PC-3 (cell line): ENCODE measurements at regions of chr1 and their contacts with region 1.

Region 1: GRCh38 chr1:181077576-181078242 is 10.8 kb upstream of the IER5 start:
- DNase-seq: peak; percentile 77
- ATAC-seq: peak; percentile 49
- H3K4me3 ChIP-seq: peak overlapping the region; percentile 41; the same call in 1 of the 2 replicates
- H3K27ac ChIP-seq: peak overlapping the region; percentile 65
- H3K4me1 ChIP-seq: peaks cover 47% of the 10 kb centered on the region
- H3K27me3 ChIP-seq: no peaks in the 10 kb centered on the region
- CTCF ChIP-seq: no peak

Region 2: GRCh38 chr1:180962178-180962577 is 115.5 kb before region 1 on chr1:
- CTCF ChIA-PET with region 1: no interaction called
- POLR2A ChIA-PET with region 1: no interaction called
- intact Hi-C with region 1: no loop called
- DNase-seq: no peak
- ATAC-seq: no peak
- H3K4me3 ChIP-seq: no peak overlapping the region
- H3K27ac ChIP-seq: no peak overlapping the region
- H3K4me1 ChIP-seq: no peaks in the 10 kb centered on the region
- H3K27me3 ChIP-seq: no peaks in the 10 kb centered on the region
- CTCF ChIP-seq: no peak

Region 3: GRCh38 chr1:181044449-181044966 is 33.2 kb before region 1 on chr1:
- CTCF ChIA-PET with region 1: no interaction called
- POLR2A ChIA-PET with region 1: no interaction called
- intact Hi-C with region 1: loop called (anchors 5 kb)
- DNase-seq: peak; percentile 2
- ATAC-seq: no peak; the same call in 1 of the 2 replicates
- H3K4me3 ChIP-seq: no peak overlapping the region
- H3K27ac ChIP-seq: no peak overlapping the region
- H3K4me1 ChIP-seq: peaks cover 17% of the 10 kb centered on the region; the same call in 1 of the 2 replicates
- H3K27me3 ChIP-seq: no peaks in the 10 kb centered on the region
- CTCF ChIP-seq: no peak